Mammary epithelial cell (primary cell): ENCODE measurements at regions of chr6 and their contacts with region 1.

Region 1: DNA sequence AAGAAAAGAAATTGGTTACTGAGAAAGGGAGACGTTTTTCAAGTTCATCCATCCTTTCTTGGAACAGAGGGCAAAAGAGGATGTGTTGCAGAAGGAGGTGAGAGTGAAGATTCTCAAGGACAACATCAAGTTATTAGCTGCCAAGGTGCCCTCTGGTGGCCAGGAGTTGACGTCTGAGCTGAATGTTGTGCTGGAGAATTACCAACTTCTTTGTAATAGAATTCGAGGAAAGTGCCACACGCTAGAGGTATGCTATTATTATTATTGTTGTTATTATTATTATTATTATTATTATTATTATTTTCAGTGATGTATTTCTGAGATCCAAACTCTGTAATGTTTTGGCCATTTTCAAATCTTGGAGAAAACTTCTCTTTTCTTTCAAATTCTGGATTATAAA is 197.0 kb downstream of the UTRN start:
- DNase-seq: peak; percentile 60
- H3K4me3 ChIP-seq: no peak overlapping the region
- H3K27ac ChIP-seq: no peak overlapping the region
- H3K4me1 ChIP-seq: no peaks in the 10 kb centered on the region
- H3K27me3 ChIP-seq: no peaks in the 10 kb centered on the region
- CTCF ChIP-seq: peak; percentile 77 to 78

Region 2: GRCh38 chr6:144104898-144105487 is 377.1 kb before region 1 on chr6:
- CTCF ChIA-PET with region 1: interaction called, 7 read pairs
- dilution Hi-C with region 1: loop called (anchors 25 kb)
- in situ Hi-C with region 1: loop called (anchors 10 kb)
- intact Hi-C with region 1: loop called (anchors 1 kb)
- DNase-seq: peak; percentile 60
- H3K4me3 ChIP-seq: no peak overlapping the region
- H3K27ac ChIP-seq: no peak overlapping the region
- H3K4me1 ChIP-seq: no peaks in the 10 kb centered on the region
- H3K27me3 ChIP-seq: no peaks in the 10 kb centered on the region
- CTCF ChIP-seq: peak; percentile 57 to 72

Region 3: GRCh38 chr6:144149891-144150709 is 332.0 kb before region 1 on chr6 and contains the start of gene STX11:
- CTCF ChIA-PET with region 1: no interaction called
- dilution Hi-C with region 1: no loop called
- in situ Hi-C with region 1: no loop called
- intact Hi-C with region 1: loop called (anchors 5 kb)
- DNase-seq: peak; percentile 59
- H3K4me3 ChIP-seq: peak within 1 kb of the TSS; percentile 68 to 92 (median 70)
- H3K27ac ChIP-seq: no peak within 1 kb of the TSS
- H3K4me1 ChIP-seq: peaks cover 8% of the 10 kb centered on the region
- H3K27me3 ChIP-seq: no peaks in the 10 kb centered on the region
- CTCF ChIP-seq: no peak
- total RNA-seq, gene STX11: 0.71 to 1.2 TPM

Region 4: DNA sequence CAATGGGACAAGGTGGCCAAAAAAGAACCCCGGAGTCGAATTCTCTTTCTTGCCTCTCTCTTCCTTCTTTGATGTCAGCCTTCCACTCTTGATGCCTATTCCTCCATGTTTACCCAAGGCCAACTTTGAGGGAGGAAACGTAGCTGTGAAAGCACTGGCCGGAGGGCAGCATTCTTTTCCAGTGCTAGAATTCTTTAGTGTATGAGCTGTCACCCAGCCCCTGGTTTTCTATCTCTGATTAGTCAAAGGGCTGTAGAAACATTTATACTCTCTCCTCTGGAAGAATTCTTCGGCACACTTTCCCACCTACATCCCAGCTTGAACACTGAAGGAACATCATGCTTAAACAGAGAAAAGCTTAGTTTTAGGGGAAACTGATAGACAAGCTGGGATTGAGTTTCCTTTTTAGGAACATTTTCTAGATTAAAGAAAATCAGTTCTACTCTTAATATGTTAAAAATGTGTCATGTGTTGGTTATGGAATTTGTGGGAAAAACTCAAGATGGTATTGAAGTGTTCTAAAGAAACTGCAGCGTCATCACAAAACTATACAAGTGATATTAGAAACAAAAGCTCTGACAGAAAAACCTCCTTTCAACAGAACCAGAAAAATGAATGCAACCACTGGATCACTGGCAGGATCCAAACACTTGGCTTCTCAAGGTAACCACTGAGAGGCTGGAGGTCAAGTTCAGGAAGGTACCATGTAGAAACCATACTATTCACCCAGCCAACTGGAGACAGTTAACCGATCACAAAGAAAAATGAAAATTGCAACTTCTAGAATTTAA is 217.7 kb before region 1 on chr6:
- CTCF ChIA-PET with region 1: interaction called, 4 read pairs
- dilution Hi-C with region 1: no loop called
- in situ Hi-C with region 1: no loop called
- intact Hi-C with region 1: loop called (anchors 5 kb)
- DNase-seq: peak; percentile 80
- H3K4me3 ChIP-seq: peak overlapping the region in 1 of 3 experiments; percentile 2
- H3K27ac ChIP-seq: peak overlapping the region; percentile 76
- H3K4me1 ChIP-seq: peaks cover 27% of the 10 kb centered on the region
- H3K27me3 ChIP-seq: no peaks in the 10 kb centered on the region
- CTCF ChIP-seq: no peak

Region 5: DNA sequence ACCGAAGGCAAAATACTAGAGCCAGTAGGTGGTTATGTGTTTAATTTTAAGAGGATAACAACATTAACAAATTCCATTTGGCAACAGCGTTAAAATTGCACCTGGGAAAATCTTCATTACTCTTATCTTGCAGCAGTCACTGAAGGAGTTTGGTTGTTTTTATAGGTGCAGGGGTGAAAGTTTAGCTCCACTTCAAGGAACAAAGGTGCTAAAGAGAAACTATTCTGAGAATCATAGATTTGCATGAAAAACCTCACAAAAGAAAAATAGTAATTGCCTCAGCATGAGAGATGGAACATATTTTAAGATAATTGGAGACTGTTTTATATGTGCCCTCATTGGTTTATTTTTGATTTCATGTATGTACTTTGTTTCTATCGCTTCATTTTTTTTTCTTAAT is 247.4 kb after region 1 on chr6:
- CTCF ChIA-PET with region 1: no interaction called
- dilution Hi-C with region 1: no loop called
- in situ Hi-C with region 1: no loop called
- intact Hi-C with region 1: no loop called
- DNase-seq: no peak
- H3K4me3 ChIP-seq: no peak overlapping the region
- H3K27ac ChIP-seq: no peak overlapping the region
- H3K4me1 ChIP-seq: peaks cover 13% of the 10 kb centered on the region
- H3K27me3 ChIP-seq: no peaks in the 10 kb centered on the region
- CTCF ChIP-seq: no peak